CD4-positive, alpha-beta memory T cell (primary cell): ENCODE measurements at regions of chr10 and their contacts with region 1.

Region 1: DNA sequence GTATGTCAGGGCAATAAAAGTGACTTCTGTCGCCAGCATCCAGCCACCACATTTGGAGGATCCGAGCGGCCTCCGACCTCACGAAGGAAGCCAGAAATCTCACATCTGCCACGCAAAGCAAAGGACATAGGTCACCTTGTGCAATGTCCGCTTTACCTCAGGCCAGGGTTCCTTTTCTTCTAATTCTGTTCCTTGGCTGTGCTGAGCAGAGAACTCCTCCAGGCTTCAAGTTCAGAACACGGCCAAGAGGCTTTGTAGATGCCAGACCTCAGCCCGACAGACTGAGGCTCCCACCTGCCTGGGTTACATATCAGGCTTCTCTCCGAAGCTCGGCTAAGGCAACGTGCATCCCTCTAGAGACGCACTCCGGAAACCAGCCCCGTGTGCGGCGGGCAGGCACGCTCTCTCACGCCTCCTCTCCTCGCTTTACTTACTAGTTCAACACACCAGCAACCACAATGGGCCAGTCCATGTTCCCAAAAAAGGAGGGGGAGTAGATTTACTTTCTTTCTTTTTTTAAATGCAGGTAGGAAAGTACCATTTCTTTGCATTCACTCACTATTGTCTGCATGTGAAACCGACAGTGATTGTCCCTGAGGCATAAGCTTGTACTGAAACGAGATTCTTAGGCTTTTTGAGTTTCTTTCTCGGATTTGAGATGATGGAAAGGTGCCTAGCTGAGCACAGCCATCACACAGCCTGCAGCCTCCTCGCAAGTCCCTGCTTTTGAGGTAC is 122.4 kb upstream of the AFAP1L2 start:
- DNase-seq: peak; percentile 90 to 96 (median 94)
- H3K4me3 ChIP-seq: peak overlapping the region; percentile 78 to 82
- H3K4me3 Mint-ChIP-seq: peak overlapping the region; percentile 90 to 99 (median 96)
- H3K27ac ChIP-seq: peak overlapping the region; percentile 80
- H3K27ac Mint-ChIP-seq: peak overlapping the region; percentile 94 to 100 (median 99)
- H3K4me1 ChIP-seq: peaks cover 55% of the 10 kb centered on the region
- H3K4me1 Mint-ChIP-seq: peaks cover 32 to 68% (median 53%) of the 10 kb centered on the region in 4 donors
- H3K27me3 ChIP-seq: no peaks in the 10 kb centered on the region
- H3K27me3 Mint-ChIP-seq: no peaks in the 10 kb centered on the region

Region 2: GRCh38 chr10:114173921-114174694 is 352.6 kb before region 1 on chr10 and contains the start of gene CCDC186:
- CTCF ChIA-PET with region 1: no interaction called
- POLR2A ChIA-PET with region 1: interaction called, 7 read pairs
- intact Hi-C with region 1: loop called (anchors 1 kb)
- DNase-seq: peak; percentile 97 to 98 (median 97)
- H3K4me3 ChIP-seq: peak within 1 kb of the TSS; percentile 47 to 84
- H3K4me3 Mint-ChIP-seq: peak within 1 kb of the TSS; percentile 92 to 99 (median 98)
- H3K27ac ChIP-seq: peak within 1 kb of the TSS; percentile 85
- H3K27ac Mint-ChIP-seq: peak within 1 kb of the TSS; percentile 83 to 99 (median 99)
- H3K4me1 ChIP-seq: peaks cover 35% of the 10 kb centered on the region
- H3K4me1 Mint-ChIP-seq: peaks cover 31 to 57% (median 38%) of the 10 kb centered on the region in 4 donors
- H3K27me3 ChIP-seq: no peaks in the 10 kb centered on the region
- H3K27me3 Mint-ChIP-seq: peaks cover 0 to 1% of the 10 kb centered on the region in 2 donors
- total RNA-seq, gene CCDC186: 39.1 to 43.3 TPM

Region 3: GRCh38 chr10:114499630-114500190 is 27.0 kb before region 1 on chr10:
- CTCF ChIA-PET with region 1: interaction called, 7 read pairs
- POLR2A ChIA-PET with region 1: interaction called, 110 read pairs
- intact Hi-C with region 1: loop called (anchors 1 kb)
- DNase-seq: peak; percentile 44 to 70 (median 59)
- H3K4me3 ChIP-seq: no peak overlapping the region
- H3K4me3 Mint-ChIP-seq: peak overlapping the region; percentile 36 to 75 (median 57)
- H3K27ac ChIP-seq: peak overlapping the region; percentile 49
- H3K27ac Mint-ChIP-seq: peak overlapping the region; percentile 70 to 93 (median 87)
- H3K4me1 ChIP-seq: peaks cover 82% of the 10 kb centered on the region
- H3K4me1 Mint-ChIP-seq: peaks cover 63 to 94% (median 82%) of the 10 kb centered on the region in 4 donors
- H3K27me3 ChIP-seq: no peaks in the 10 kb centered on the region
- H3K27me3 Mint-ChIP-seq: no peaks in the 10 kb centered on the region

Region 4: DNA sequence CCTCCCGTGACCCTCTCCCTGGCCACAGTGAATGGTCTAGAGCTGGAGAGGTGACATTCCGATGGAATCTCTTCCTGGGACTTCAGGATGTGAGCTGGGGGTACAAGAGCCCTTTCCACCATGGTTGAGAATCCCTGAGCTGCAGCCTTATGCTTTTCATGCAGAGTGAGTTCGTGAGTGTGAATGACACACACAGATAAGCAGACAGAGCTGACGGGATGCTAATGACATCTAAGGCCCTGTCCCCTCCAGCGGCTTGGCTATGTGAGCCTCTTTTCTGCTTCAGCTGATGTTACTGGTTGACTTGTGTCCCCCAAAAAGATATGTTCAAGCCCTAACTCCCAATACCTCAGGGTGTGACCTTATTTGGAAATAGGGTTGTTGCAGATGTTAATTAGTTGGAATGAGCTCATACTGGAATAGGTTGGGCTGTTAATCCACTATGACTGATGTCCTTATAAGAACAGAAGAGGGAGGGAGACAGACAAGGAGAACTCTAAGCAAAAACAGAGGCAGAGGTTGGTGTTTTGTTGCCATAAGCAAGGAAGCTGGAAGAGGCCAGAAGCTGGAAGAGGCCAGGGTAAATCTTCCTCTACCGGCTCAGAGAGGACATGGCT is 11.3 kb before region 1 on chr10:
- CTCF ChIA-PET with region 1: interaction called, 12 read pairs
- POLR2A ChIA-PET with region 1: interaction called, 23 read pairs
- intact Hi-C with region 1: no loop called
- DNase-seq: no peak
- H3K4me3 ChIP-seq: no peak overlapping the region
- H3K4me3 Mint-ChIP-seq: peak overlapping the region in 4 of 8 donors; percentile 4 to 35 (median 15)
- H3K27ac ChIP-seq: no peak overlapping the region
- H3K27ac Mint-ChIP-seq: peak overlapping the region in 5 of 7 donors; percentile 20 to 77 (median 52)
- H3K4me1 ChIP-seq: peaks cover 93% of the 10 kb centered on the region
- H3K4me1 Mint-ChIP-seq: peaks cover 71 to 95% (median 83%) of the 10 kb centered on the region in 4 donors
- H3K27me3 ChIP-seq: no peaks in the 10 kb centered on the region
- H3K27me3 Mint-ChIP-seq: no peaks in the 10 kb centered on the region

Region 5: GRCh38 chr10:114550756-114551635 is 24.3 kb after region 1 on chr10:
- CTCF ChIA-PET with region 1: interaction called, 175 read pairs
- POLR2A ChIA-PET with region 1: interaction called, 459 read pairs
- intact Hi-C with region 1: no loop called
- DNase-seq: peak in 3 of 5 donors; percentile 33 to 39 (median 37)
- H3K4me3 ChIP-seq: no peak overlapping the region
- H3K4me3 Mint-ChIP-seq: no peak overlapping the region
- H3K27ac ChIP-seq: no peak overlapping the region
- H3K27ac Mint-ChIP-seq: peak overlapping the region in 4 of 7 donors; percentile 4 to 83 (median 40)
- H3K4me1 ChIP-seq: peaks cover 33% of the 10 kb centered on the region
- H3K4me1 Mint-ChIP-seq: peaks cover 13 to 28% (median 20%) of the 10 kb centered on the region in 4 donors
- H3K27me3 ChIP-seq: no peaks in the 10 kb centered on the region
- H3K27me3 Mint-ChIP-seq: no peaks in the 10 kb centered on the region

Region 6: DNA sequence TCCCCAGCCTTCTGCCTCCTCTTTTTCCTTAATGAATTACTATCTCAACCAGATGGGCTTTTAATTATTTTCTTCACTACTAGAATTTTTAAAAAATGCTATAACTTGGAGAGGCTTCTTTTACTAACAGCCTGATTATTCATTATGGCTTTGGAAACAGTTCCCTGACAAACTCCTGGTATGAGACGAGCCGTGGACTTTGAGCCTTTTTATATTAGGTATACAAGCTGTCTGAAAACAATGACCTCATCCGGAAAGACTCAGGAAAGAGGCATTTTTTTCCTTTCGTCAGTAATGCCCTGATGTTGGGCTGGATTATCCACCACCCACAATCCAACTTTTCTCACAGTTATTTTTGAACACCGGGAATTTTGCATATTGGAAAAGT is 158.1 kb after region 1 on chr10:
- CTCF ChIA-PET with region 1: no interaction called
- POLR2A ChIA-PET with region 1: no interaction called
- intact Hi-C with region 1: no loop called
- DNase-seq: no peak
- H3K4me3 ChIP-seq: no peak overlapping the region
- H3K4me3 Mint-ChIP-seq: no peak overlapping the region
- H3K27ac ChIP-seq: no peak overlapping the region
- H3K27ac Mint-ChIP-seq: no peak overlapping the region
- H3K4me1 ChIP-seq: no peaks in the 10 kb centered on the region
- H3K4me1 Mint-ChIP-seq: no peaks in the 10 kb centered on the region
- H3K27me3 ChIP-seq: no peaks in the 10 kb centered on the region
- H3K27me3 Mint-ChIP-seq: no peaks in the 10 kb centered on the region